Aorta (tissue), 5 donors: ENCODE measurements at regions of chr3 and their contacts with region 1.

Region 1: GRCh38 chr3:50474717-50475116 is 28.7 kb downstream of the CACNA2D2 start:
- DNase-seq: no peak
- ATAC-seq: peak; percentile 50
- H3K4me3 ChIP-seq: no peak overlapping the region
- H3K27ac ChIP-seq: peak overlapping the region; percentile 6 to 11
- H3K4me1 ChIP-seq: no peaks in the 10 kb centered on the region
- H3K27me3 ChIP-seq: no peaks in the 10 kb centered on the region

Region 2: GRCh38 chr3:50388016-50388719 is 86.5 kb before region 1 on chr3:
- intact Hi-C with region 1: loop called in 1 of 2 experiments (anchors 10 kb)
- DNase-seq: no peak
- ATAC-seq: no peak
- H3K4me3 ChIP-seq: no peak overlapping the region
- H3K27ac ChIP-seq: no peak overlapping the region
- H3K4me1 ChIP-seq: no peaks in the 10 kb centered on the region
- H3K27me3 ChIP-seq: no peaks in the 10 kb centered on the region

Region 3: GRCh38 chr3:50436114-50436674 is 38.5 kb before region 1 on chr3:
- intact Hi-C with region 1: loop called in 1 of 2 experiments (anchors 1 kb)
- DNase-seq: peak; percentile 63 to 90
- ATAC-seq: peak; percentile 61
- H3K4me3 ChIP-seq: no peak overlapping the region
- H3K27ac ChIP-seq: no peak overlapping the region
- H3K4me1 ChIP-seq: no peaks in the 10 kb centered on the region
- H3K27me3 ChIP-seq: no peaks in the 10 kb centered on the region

Region 4: DNA sequence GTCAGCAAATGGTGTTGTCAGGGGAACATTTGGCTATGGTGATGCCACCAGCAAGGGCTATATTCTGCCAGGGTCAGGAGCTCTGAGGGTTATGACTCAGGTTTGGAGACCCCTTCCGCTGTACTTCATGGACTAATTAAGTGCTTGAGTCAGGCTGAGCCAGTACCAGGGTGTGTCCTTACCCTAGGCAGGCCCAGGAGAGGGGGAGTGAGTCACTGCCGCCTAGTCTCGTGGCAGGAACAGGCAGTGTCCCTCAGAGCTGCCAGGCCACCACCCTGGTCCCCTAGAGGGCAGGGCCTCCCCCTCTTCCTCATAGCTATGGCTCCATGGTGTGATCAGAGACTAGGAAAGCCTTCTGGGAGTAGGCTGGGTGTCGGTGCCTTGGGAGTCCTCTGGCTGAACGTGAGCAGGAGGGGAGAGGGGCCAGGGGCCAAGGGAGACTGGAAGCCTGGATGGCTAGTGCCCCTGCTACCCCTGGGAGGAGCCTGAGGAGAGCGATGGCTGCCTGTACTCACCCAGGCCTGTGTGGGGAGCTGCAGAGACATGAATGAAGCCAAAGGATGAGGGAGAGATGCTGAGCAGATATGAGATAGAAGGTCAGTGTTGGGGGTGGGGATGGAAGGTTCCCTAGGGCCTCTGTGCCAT is 152.8 kb after region 1 on chr3:
- intact Hi-C with region 1: no loop called
- DNase-seq: peak in 1 of 2 donors; percentile 71
- ATAC-seq: peak; percentile 61
- H3K4me3 ChIP-seq: no peak overlapping the region
- H3K27ac ChIP-seq: no peak overlapping the region
- H3K4me1 ChIP-seq: no peaks in the 10 kb centered on the region
- H3K27me3 ChIP-seq: no peaks in the 10 kb centered on the region